ENCODE measurements at regions of chr17 and their contacts with region 1.

Region 1: GRCh38 chr17:77881545-77881944 is 77.0 kb upstream of the TNRC6C start:
- DNase-seq: peak; percentile 39 to 82 (median 60)
- ATAC-seq: peak; percentile 17 to 37
- H3K4me3 Mint-ChIP-seq: peak overlapping the region; percentile 72 to 95 (median 84)
- H3K27ac Mint-ChIP-seq: peak overlapping the region; percentile 93 to 100 (median 98)
- H3K4me1 Mint-ChIP-seq: peaks cover 47 to 95% (median 93%) of the 10 kb centered on the region in 4 donors
- H3K27me3 Mint-ChIP-seq: no peaks in the 10 kb centered on the region

Region 2: GRCh38 chr17:77842528-77843147 is 38.9 kb before region 1 on chr17:
- POLR2A ChIA-PET with region 1: interaction called, 15 read pairs
- DNase-seq: no peak
- ATAC-seq: no peak
- H3K4me3 Mint-ChIP-seq: peak overlapping the region in 7 of 10 donors; percentile 33 to 79 (median 61)
- H3K27ac Mint-ChIP-seq: peak overlapping the region in 9 of 10 donors; percentile 17 to 89 (median 79)
- H3K4me1 Mint-ChIP-seq: peaks cover 28 to 72% (median 55%) of the 10 kb centered on the region in 4 donors
- H3K27me3 Mint-ChIP-seq: peaks cover 0 to 2% (median 0%) of the 10 kb centered on the region in 5 donors

Region 3: GRCh38 chr17:77869665-77870132 is 11.8 kb before region 1 on chr17:
- POLR2A ChIA-PET with region 1: interaction called, 16 read pairs
- DNase-seq: peak in 2 of 10 donors; percentile 50 to 58
- ATAC-seq: peak; percentile 37 to 50
- H3K4me3 Mint-ChIP-seq: peak overlapping the region in 9 of 10 donors; percentile 20 to 82 (median 54)
- H3K27ac Mint-ChIP-seq: peak overlapping the region in 8 of 10 donors; percentile 1 to 73 (median 52)
- H3K4me1 Mint-ChIP-seq: peaks cover 34 to 83% (median 57%) of the 10 kb centered on the region in 4 donors
- H3K27me3 Mint-ChIP-seq: no peaks in the 10 kb centered on the region

Region 4: GRCh38 chr17:77892469-77893143 is 11.1 kb after region 1 on chr17:
- POLR2A ChIA-PET with region 1: interaction called, 15 read pairs
- DNase-seq: peak in 1 of 10 donors; percentile 50
- ATAC-seq: no peak
- H3K4me3 Mint-ChIP-seq: peak overlapping the region in 6 of 10 donors; percentile 24 to 75 (median 52)
- H3K27ac Mint-ChIP-seq: peak overlapping the region in 7 of 10 donors; percentile 27 to 91 (median 76)
- H3K4me1 Mint-ChIP-seq: peaks cover 27 to 52% (median 41%) of the 10 kb centered on the region in 4 donors
- H3K27me3 Mint-ChIP-seq: no peaks in the 10 kb centered on the region

Region 5: GRCh38 chr17:77924757-77925336 is 43.3 kb after region 1 on chr17:
- POLR2A ChIA-PET with region 1: no interaction called
- DNase-seq: no peak
- ATAC-seq: no peak
- H3K4me3 Mint-ChIP-seq: peak overlapping the region in 1 of 10 donors; percentile 66
- H3K27ac Mint-ChIP-seq: peak overlapping the region in 1 of 10 donors; percentile 83
- H3K4me1 Mint-ChIP-seq: peaks cover 14 to 30% (median 21%) of the 10 kb centered on the region in 4 donors
- H3K27me3 Mint-ChIP-seq: peaks cover 0 to 4% (median 0%) of the 10 kb centered on the region in 5 donors